Panc1 (cell line): ENCODE measurements at regions of chr1 and their contacts with region 1.

Region 1: DNA sequence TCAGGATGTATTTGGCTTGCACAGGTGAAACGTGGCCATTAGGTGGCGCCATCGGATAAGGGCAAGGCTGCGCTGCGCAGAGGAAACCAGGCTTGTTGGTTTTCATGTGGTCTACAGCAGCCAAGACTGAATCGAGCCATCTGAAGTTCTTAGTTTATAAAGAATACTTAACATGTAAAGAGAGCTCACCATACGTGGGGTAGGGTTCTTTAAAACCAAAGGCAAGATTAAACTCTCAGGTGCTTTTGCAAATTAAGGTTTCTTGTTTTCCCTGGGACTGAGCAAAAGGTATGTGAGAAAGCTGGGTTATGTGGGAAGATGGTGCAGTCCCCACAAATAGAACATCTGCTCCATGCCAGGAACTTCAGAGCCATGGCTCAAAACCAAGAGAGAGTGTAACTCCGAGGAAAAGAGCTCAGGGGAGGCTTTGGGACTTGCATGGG is 9.3 kb downstream of the MASP2 start:
- DNase-seq: peak; percentile 78
- ATAC-seq: peak; percentile 95
- H3K4me3 ChIP-seq: no peak overlapping the region
- H3K27ac ChIP-seq: no peak overlapping the region
- H3K4me1 ChIP-seq: no peaks in the 10 kb centered on the region
- H3K27me3 ChIP-seq: no peaks in the 10 kb centered on the region
- CTCF ChIP-seq: peak; percentile 99

Region 2: DNA sequence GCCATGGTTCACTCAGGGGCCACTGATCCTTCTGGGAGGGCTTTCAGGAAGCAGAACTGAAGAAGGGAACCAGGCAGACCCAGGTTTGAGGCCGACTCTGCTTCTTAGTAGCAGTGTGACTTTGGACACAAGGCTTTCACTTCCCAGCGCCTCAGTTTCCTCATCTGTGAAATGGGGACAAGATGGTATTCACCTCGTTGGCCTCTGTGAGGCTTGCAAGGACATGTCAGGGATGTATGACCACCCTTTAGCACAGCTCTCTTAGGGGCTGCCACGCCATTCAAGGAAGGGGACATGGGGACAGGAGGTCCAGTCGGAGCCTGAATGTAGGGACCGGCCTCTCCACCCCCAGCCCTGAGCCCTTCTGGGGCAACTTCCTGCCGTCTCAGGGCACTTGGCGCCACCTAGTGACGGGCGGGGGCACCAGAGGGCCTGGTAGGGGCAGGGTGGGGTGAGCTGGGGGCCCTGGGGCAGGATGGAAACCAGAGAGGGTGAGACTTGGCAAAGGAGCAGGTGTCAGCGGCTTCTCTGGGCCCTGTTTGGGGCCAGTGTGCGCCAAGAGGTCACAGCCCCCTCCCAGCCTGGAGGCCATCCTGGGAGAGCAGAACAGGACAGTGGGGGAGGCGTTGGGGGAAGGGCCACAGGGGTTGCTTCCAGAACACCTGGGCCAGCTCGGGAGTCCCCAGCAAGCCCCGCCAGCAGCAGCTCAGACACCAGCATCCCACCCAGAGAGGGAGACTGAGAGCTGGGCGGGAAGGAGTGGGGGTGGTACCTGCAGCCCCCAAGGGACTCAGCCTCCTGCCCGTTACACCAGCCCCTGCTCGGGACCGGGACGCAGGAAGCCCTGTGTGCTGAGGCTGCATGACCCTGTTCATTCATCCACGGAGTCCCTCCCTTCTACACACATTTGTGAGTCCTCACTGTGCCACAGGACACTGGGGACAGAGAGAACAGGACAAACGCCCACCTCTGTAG is 127.8 kb before region 1 on chr1:
- CTCF ChIA-PET with region 1: no interaction called
- POLR2A ChIA-PET with region 1: no interaction called
- in situ Hi-C with region 1: no loop called
- intact Hi-C with region 1: no loop called
- DNase-seq: no peak
- ATAC-seq: peak; percentile 83
- H3K4me3 ChIP-seq: no peak overlapping the region
- H3K27ac ChIP-seq: no peak overlapping the region
- H3K4me1 ChIP-seq: peaks cover 5% of the 10 kb centered on the region; the same call in 1 of the 2 replicates
- H3K27me3 ChIP-seq: no peaks in the 10 kb centered on the region
- CTCF ChIP-seq: peak; percentile 87; the same call in 1 of the 2 replicates

Region 3: DNA sequence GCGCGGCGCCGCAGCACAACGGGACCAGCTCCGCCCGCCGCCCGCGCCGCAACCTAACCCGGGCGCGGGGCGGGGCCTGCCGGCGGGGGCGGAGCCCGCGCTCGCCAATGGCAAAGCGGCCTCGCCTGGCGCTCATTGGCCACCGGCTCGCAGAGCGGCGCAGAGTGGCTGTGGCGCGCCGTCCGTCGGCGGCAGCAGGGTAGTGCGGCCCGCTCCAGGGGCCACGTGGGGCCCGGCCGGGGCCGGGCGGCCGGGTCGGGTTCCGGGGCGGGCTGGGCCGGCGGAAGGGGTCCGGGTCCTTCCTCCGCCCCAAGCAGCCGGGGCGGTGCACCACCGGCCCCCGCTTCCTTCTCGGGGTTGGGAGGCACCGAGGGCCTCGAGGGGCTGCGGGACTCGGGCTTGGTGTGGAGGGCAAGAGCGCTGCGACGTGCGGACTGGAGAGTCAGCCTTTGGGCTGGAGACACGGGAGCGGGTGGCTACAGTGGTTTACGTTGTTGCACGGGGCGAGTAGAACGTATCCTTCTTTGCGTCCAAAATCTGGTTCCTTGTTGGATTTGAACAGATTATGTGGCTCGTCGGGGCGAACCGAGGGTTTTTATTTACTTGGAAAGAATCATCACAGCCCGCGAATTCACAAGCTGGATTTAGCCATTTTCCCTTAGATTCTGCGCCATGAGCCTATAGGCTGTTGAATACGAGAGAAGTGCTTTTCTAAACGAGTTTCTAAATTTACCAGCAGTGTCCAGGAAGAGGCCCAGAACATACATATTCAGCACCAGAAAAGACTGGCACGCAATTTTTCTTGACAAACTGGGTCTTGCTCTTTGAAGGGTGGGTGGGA is 22.4 kb after region 1 on chr1 and contains the start of gene SRM:
- CTCF ChIA-PET with region 1: interaction called, 15 read pairs
- POLR2A ChIA-PET with region 1: interaction called, 3 read pairs
- in situ Hi-C with region 1: no loop called
- intact Hi-C with region 1: no loop called
- DNase-seq: no peak
- ATAC-seq: peak; percentile 96
- H3K4me3 ChIP-seq: peak within 1 kb of the TSS; percentile 82 to 84
- H3K27ac ChIP-seq: peak within 1 kb of the TSS; percentile 89
- H3K4me1 ChIP-seq: peaks cover 15% of the 10 kb centered on the region
- H3K27me3 ChIP-seq: no peaks in the 10 kb centered on the region
- CTCF ChIP-seq: no peak
- total RNA-seq, gene SRM: 249 TPM

Region 4: GRCh38 chr1:11245904-11246719 is 208.4 kb after region 1 on chr1:
- CTCF ChIA-PET with region 1: no interaction called
- POLR2A ChIA-PET with region 1: no interaction called
- in situ Hi-C with region 1: no loop called
- intact Hi-C with region 1: no loop called
- DNase-seq: no peak
- ATAC-seq: no peak
- H3K4me3 ChIP-seq: no peak overlapping the region
- H3K27ac ChIP-seq: no peak overlapping the region
- H3K4me1 ChIP-seq: no peaks in the 10 kb centered on the region
- H3K27me3 ChIP-seq: no peaks in the 10 kb centered on the region
- CTCF ChIP-seq: no peak

Region 5: GRCh38 chr1:11473491-11474034 is 435.8 kb after region 1 on chr1:
- CTCF ChIA-PET with region 1: no interaction called
- POLR2A ChIA-PET with region 1: no interaction called
- in situ Hi-C with region 1: no loop called
- intact Hi-C with region 1: no loop called
- DNase-seq: no peak
- ATAC-seq: no peak
- H3K4me3 ChIP-seq: no peak overlapping the region
- H3K27ac ChIP-seq: no peak overlapping the region
- H3K4me1 ChIP-seq: no peaks in the 10 kb centered on the region
- H3K27me3 ChIP-seq: peaks cover 4% of the 10 kb centered on the region; the same call in 1 of the 2 replicates
- CTCF ChIP-seq: no peak